ENCODE measurements at regions of chr17 and their contacts with region 1.

Region 1: GRCh38 chr17:30701498-30701989 is 122.9 kb downstream of the CRLF3 start:
- DNase-seq: no peak
- H3K4me3 ChIP-seq: no peak overlapping the region
- H3K27ac ChIP-seq: no peak overlapping the region
- H3K4me1 ChIP-seq: no peaks in the 10 kb centered on the region
- H3K27me3 ChIP-seq: no peaks in the 10 kb centered on the region
- CTCF ChIP-seq: no peak

Region 2: GRCh38 chr17:30148376-30148775 is 553.2 kb before region 1 on chr17:
- CTCF ChIA-PET with region 1: no interaction called
- POLR2A ChIA-PET with region 1: no interaction called
- intact Hi-C with region 1: no loop called
- DNase-seq: no peak
- H3K4me3 ChIP-seq: no peak overlapping the region
- H3K27ac ChIP-seq: 0 out of 2 replicates have a peak overlapping the region, but pooled peaks have one; percentile 13
- H3K4me1 ChIP-seq: no peaks in the 10 kb centered on the region
- H3K27me3 ChIP-seq: no peaks in the 10 kb centered on the region
- CTCF ChIP-seq: no peak

Region 3: DNA sequence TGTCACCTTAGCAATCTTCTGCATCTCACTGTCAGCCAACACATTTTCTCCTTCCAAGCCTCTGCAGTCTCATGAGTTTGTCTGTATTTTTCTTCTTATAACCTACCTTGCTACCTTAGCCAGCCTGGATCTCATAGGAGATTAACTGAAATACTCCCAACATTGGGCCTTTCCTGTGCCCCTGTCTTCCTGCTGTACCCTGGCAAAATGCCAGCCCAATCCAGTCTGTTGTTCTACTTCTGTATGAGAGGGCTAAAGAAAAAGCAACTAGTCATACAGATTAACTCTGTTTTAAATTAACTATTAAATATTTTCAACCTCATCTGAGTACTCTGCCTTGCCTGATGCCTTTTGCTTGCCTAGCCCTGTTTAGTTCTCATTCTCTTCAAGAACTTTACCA is 206.0 kb before region 1 on chr17:
- CTCF ChIA-PET with region 1: no interaction called
- POLR2A ChIA-PET with region 1: no interaction called
- intact Hi-C with region 1: no loop called
- DNase-seq: no peak
- H3K4me3 ChIP-seq: no peak overlapping the region
- H3K27ac ChIP-seq: no peak overlapping the region
- H3K4me1 ChIP-seq: no peaks in the 10 kb centered on the region
- H3K27me3 ChIP-seq: no peaks in the 10 kb centered on the region
- CTCF ChIP-seq: no peak

Region 4: GRCh38 chr17:30939051-30939689 is 237.6 kb after region 1 on chr17:
- CTCF ChIA-PET with region 1: no interaction called
- POLR2A ChIA-PET with region 1: interaction called, 42 read pairs
- intact Hi-C with region 1: no loop called
- DNase-seq: no peak
- H3K4me3 ChIP-seq: no peak overlapping the region
- H3K27ac ChIP-seq: no peak overlapping the region
- H3K4me1 ChIP-seq: no peaks in the 10 kb centered on the region
- H3K27me3 ChIP-seq: no peaks in the 10 kb centered on the region
- CTCF ChIP-seq: no peak

Measured in PC-9 (cell line).